ENCODE measurements at regions of chr4 and their contacts with region 1.

Region 1: GRCh38 chr4:45776146-45776545 is 347.7 kb downstream of the GABRG1 start:
- DNase-seq: no peak
- ATAC-seq: no peak
- H3K4me3 ChIP-seq: no peak overlapping the region
- H3K27ac ChIP-seq: no peak overlapping the region
- H3K4me1 ChIP-seq: no peaks in the 10 kb centered on the region
- H3K27me3 ChIP-seq: no peaks in the 10 kb centered on the region
- CTCF ChIP-seq: no peak
- POLR2A ChIP-seq: no peak

Region 2: DNA sequence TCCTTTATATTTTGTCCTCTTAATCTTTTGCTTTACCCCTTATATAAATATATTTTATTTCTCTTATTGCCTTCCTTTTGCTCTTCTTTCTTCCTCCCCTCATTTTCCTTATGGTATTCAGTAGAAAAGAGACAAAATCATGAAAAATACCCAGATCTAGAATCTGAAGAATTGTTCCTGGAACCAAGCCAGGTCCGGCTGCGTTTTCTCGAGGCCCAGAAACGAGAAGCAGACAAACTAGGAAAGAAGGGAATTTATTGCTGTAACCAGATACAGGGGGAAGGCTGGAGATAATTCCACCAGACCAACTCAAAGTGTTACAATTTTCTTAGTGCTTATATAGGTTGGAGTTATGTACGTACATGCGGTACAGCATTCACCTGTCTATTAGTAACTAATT is 19.0 kb after region 1 on chr4:
- intact Hi-C with region 1: loop called in 1 of 10 experiments (anchors 2 kb)
- DNase-seq: no peak
- ATAC-seq: no peak
- H3K4me3 ChIP-seq: no peak overlapping the region
- H3K27ac ChIP-seq: no peak overlapping the region
- H3K4me1 ChIP-seq: no peaks in the 10 kb centered on the region
- H3K27me3 ChIP-seq: no peaks in the 10 kb centered on the region
- CTCF ChIP-seq: no peak
- POLR2A ChIP-seq: no peak

Region 3: GRCh38 chr4:46146993-46147392 is 370.8 kb after region 1 on chr4:
- intact Hi-C with region 1: no loop called
- DNase-seq: no peak
- ATAC-seq: no peak
- H3K4me3 ChIP-seq: no peak overlapping the region
- H3K27ac ChIP-seq: no peak overlapping the region
- H3K4me1 ChIP-seq: no peaks in the 10 kb centered on the region
- H3K27me3 ChIP-seq: no peaks in the 10 kb centered on the region
- CTCF ChIP-seq: no peak
- POLR2A ChIP-seq: no peak